ENCODE measurements at regions of chr12 and their contacts with region 1.

Region 1: GRCh38 chr12:2291182-2291832 is 238.5 kb downstream of the CACNA1C start:
- DNase-seq: peak; percentile 21
- H3K4me3 Mint-ChIP-seq: no peak overlapping the region
- H3K27ac Mint-ChIP-seq: no peak overlapping the region
- H3K4me1 Mint-ChIP-seq: peaks cover 8% of the 10 kb centered on the region
- H3K27me3 Mint-ChIP-seq: peaks cover 16% of the 10 kb centered on the region

Region 2: GRCh38 chr12:2057041-2057794 is 234.1 kb before region 1 on chr12:
- intact Hi-C with region 1: loop called (anchors 1 kb)
- DNase-seq: no peak
- H3K4me3 Mint-ChIP-seq: no peak overlapping the region
- H3K27ac Mint-ChIP-seq: no peak overlapping the region
- H3K4me1 Mint-ChIP-seq: peaks cover 10% of the 10 kb centered on the region
- H3K27me3 Mint-ChIP-seq: peaks cover 68% of the 10 kb centered on the region

Region 3: DNA sequence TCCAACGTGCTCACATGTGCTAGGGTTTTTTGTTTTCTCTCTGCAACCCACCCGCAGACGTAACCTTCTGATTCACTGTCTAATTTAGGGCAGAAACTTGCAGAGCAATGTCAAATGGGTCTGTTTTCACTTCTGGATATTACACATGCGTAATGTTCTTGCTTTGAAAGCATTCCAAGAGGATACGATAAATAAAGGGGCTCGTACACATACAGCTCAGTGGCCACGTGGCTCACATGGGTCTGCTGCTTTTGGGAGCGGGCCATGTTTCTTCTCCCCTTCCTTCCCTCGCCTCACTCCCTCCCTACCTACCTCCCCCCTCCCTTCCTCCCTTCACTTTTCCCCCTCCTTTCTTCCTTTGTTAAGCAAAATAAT is 215.1 kb before region 1 on chr12:
- intact Hi-C with region 1: no loop called
- DNase-seq: no peak
- H3K4me3 Mint-ChIP-seq: no peak overlapping the region
- H3K27ac Mint-ChIP-seq: no peak overlapping the region
- H3K4me1 Mint-ChIP-seq: no peaks in the 10 kb centered on the region
- H3K27me3 Mint-ChIP-seq: peaks cover 2% of the 10 kb centered on the region

Region 4: DNA sequence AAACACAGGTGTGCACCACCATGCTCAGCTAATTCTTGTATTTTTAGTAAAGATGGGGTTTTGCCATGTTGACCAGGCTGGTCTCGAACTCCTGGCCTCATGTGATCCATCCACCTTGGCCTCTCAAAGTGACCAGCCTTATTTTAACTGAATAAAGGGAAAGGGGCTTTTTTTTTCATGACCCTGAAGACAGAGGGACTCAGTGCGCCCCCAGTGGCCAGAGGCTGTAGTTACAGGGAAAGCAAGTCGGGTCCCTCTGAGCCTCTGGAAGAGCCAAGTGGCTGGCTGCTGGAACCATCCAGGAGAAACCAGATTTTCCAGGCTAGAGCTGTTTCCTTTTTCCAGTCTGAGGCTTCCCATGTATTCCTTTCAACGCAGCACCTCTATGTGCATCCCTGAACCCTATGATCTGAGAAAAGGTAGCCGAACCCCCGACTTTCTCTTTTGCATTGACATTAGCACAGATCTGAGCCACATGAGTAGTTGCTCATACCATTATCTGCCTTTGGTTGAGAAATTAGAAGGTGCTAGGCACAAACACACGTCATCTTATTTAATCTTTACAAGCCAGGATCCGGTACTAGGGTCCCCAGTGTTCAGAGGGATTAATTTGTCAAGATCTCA is 104.2 kb after region 1 on chr12:
- intact Hi-C with region 1: no loop called
- DNase-seq: no peak
- H3K4me3 Mint-ChIP-seq: no peak overlapping the region
- H3K27ac Mint-ChIP-seq: no peak overlapping the region
- H3K4me1 Mint-ChIP-seq: no peaks in the 10 kb centered on the region
- H3K27me3 Mint-ChIP-seq: peaks cover 20% of the 10 kb centered on the region